ENCODE measurements at regions of chr2 and their contacts with region 1.

Region 1: GRCh38 chr2:71614976-71615766 is 161.8 kb downstream of the DYSF start:
- DNase-seq: peak; percentile 94
- ATAC-seq: peak; percentile 96

Region 2: DNA sequence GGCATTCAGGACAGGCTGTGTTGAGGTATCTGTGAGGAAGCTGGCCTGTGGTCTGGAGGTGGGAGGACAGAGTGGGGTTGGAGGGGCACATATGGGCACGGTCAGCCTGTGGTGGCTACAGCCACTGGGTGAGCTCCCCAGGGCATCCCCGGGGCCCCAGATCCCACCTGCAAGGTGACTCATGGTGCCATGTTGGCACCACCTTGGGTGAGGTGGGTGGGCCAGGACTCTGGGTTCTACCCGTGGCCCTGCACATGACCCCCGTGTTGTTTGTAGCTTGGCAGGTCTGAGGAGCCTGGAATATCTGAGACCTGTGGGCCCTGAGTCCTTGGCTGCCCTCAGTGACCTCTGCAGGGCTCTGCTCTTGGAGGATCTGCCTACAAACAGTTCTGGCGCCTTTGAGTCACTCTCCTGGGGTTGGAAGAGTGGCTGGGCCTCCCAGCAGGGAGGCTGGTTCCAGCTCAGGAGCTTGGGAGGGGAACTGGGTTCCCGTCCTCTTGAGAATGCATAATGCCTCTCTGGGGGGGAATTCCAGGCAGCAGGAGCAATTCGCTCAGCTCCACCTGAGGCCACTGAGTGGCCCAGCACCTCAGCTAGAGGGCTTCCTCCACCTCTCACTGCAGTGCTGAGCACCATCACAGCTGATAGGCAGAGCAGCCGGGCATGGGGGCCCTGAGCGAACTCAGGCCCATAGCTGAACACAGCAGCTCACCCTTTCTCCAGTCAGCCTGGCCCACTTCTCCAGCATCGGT is 56.7 kb before region 1 on chr2:
- intact Hi-C with region 1: no loop called
- DNase-seq: peak; percentile 31
- ATAC-seq: no peak

Region 3: GRCh38 chr2:71700658-71701397 is 85.7 kb after region 1 on chr2:
- intact Hi-C with region 1: loop called (anchors 5 kb)
- DNase-seq: peak; percentile 89
- ATAC-seq: peak; percentile 90

Region 4: GRCh38 chr2:71716781-71717624 is 101.8 kb after region 1 on chr2:
- intact Hi-C with region 1: loop called (anchors 1 kb)
- DNase-seq: peak; percentile 92
- ATAC-seq: peak; percentile 96

Region 5: GRCh38 chr2:71767663-71768062 is 152.5 kb after region 1 on chr2:
- intact Hi-C with region 1: no loop called
- DNase-seq: no peak
- ATAC-seq: no peak

Measured in Right ventricle myocardium inferior (tissue), 1 donor.